Calu3 (cell line): ENCODE measurements at regions of chr21 and their contacts with region 1.

Region 1: DNA sequence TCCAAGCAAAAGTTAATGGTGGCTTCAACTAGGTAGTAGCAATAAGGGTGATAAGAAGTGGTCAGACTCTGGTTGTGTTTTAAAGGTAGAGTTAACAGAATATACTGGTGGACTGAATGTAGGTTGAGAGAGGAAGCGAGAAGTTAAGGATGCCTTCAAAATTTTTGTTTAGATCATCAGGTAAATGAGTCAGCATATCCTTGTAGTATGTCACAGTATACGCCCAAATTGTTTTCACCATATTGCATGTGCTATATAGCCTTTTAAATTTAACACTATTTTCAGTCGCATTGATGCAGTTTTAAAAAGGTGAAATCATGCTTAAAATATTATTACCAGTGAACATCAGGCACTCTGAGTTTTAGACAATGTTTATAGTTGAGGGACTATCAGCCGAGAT is 74.6 kb downstream of the RBM11 start:
- DNase-seq: no peak
- H3K4me3 Mint-ChIP-seq: no peak overlapping the region
- H3K27ac Mint-ChIP-seq: no peak overlapping the region
- H3K4me1 Mint-ChIP-seq: no peaks in the 10 kb centered on the region
- H3K27me3 Mint-ChIP-seq: no peaks in the 10 kb centered on the region
- CTCF ChIP-seq: no peak

Region 2: DNA sequence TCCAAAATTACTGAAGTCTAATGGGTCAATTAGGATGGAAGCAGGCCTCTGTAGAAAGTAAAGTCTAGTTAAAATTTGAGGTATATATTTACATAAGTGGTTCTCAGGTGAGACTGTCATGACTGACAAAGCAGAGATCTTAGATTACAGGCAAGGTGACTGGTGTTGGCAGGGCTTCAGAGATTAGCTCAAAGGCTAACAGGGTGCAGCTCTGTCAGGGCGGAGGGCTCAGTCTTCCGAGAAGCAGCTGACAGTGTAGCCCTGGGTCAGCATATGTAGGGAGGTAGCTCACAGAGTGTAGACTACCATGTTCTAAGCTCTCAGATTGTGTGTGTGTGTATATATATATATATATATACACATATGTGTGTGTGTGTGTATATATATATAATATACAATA is 20.0 kb before region 1 on chr21:
- CTCF ChIA-PET with region 1: no interaction called
- intact Hi-C with region 1: loop called (anchors 1 kb)
- DNase-seq: no peak
- H3K4me3 Mint-ChIP-seq: no peak overlapping the region
- H3K27ac Mint-ChIP-seq: no peak overlapping the region
- H3K4me1 Mint-ChIP-seq: no peaks in the 10 kb centered on the region
- H3K27me3 Mint-ChIP-seq: peaks cover 10% of the 10 kb centered on the region
- CTCF ChIP-seq: no peak

Region 3: GRCh38 chr21:14545906-14546480 is 255.4 kb after region 1 on chr21 and contains the start of gene SAMSN1:
- CTCF ChIA-PET with region 1: no interaction called
- intact Hi-C with region 1: no loop called
- DNase-seq: peak; percentile 19
- H3K4me3 Mint-ChIP-seq: peak within 1 kb of the TSS; percentile 65
- H3K27ac Mint-ChIP-seq: peak within 1 kb of the TSS; percentile 66
- H3K4me1 Mint-ChIP-seq: peaks cover 26% of the 10 kb centered on the region
- H3K27me3 Mint-ChIP-seq: no peaks in the 10 kb centered on the region
- CTCF ChIP-seq: no peak
- total RNA-seq, gene SAMSN1: 0.93 and 1.5 TPM in 2 replicates